ENCODE measurements at regions of chr1 and their contacts with region 1.

Region 1: GRCh38 chr1:171313835-171314320 is at the start of gene FMO4:
- DNase-seq: peak; percentile 79 to 94 (median 89)
- H3K4me3 ChIP-seq: peak within 1 kb of the TSS; percentile 27
- H3K27ac ChIP-seq: peak within 1 kb of the TSS in 1 of 2 donors; percentile 55
- H3K4me1 ChIP-seq: peaks cover 2% of the 10 kb centered on the region
- H3K27me3 ChIP-seq: no peaks in the 10 kb centered on the region
- CTCF ChIP-seq: peak; percentile 74 to 94 (median 85)
- EP300 ChIP-seq: peak; percentile 58
- POLR2A ChIP-seq: no peak
- total RNA-seq, gene FMO4: 1.9 to 4.4 (median 3.7) TPM

Region 2: DNA sequence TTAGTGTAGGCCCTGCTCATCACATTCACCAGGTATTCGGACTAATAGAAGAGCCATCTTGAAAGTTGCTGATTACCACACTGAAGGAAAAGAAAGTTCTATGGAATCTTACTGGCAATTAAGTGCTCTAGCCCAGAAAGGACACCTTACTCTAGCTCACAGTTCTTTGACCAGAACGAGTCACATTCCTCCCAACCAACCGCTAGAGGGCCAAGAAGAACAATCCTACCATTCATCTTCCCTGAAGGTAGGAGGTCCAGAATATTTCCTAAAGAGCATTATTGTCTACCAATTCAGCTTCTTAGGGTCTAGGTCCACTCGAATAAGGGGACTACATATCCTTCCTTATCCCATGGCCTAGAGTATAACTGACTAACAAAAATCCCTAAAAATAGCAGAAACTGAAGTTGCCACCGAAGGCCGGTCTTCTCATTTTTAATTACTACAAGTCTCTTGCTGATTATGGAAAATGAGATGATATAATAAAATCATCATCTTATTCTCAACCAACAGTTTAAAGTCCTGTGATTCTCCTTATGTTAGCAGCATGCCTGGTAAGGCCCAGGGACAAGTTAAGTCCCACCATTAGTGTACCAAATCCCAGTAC is 68.3 kb before region 1 on chr1:
- intact Hi-C with region 1: loop called (anchors 5 to 10 kb)
- DNase-seq: peak in 1 of 5 donors; percentile 47
- H3K4me3 ChIP-seq: no peak overlapping the region
- H3K27ac ChIP-seq: no peak overlapping the region
- H3K4me1 ChIP-seq: no peaks in the 10 kb centered on the region
- H3K27me3 ChIP-seq: no peaks in the 10 kb centered on the region
- CTCF ChIP-seq: peak in 2 of 3 donors; percentile 32 to 47
- EP300 ChIP-seq: no peak
- POLR2A ChIP-seq: no peak

Region 3: DNA sequence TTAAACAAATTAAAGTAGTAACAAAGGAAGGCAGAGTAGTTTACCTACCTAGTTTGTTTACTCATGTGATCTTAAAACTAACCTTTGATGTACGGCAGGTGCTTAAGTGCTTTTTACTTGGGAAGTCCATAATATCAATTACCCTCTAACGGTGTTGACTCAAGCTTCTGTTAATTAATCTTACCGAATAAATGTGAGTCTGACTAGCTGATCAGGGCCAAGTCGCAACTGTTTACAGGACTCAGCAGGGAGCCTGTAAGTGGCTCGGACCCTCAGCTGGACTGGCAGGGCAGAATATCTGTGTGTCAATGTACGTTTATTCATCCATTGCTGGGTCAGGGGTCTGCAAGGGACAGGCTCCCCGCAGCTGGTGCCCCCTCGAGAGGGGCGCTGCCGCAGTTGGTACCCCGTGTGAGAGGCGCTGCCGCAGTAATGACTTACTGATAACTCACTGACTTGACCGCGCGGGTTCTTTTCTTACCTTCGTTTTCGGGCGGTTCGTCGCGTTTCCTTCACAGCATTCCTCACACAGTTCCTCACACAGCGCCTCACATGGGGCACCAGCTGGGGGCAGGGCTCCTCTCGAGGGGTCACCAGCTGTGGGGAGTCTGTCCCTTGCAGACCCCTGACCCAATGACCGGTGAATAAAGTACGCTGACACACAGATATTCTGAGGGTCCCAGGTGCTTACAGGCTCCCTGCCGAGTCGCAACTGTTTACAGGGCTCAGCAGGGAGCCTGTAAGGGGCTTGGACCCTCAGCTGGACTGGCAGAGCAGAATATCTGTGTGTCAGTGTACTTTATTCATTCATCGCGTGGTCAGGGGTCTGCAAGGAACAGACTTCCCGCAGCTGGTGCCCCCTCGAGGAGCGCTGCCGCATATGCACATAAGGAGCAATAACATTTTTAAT is 62.6 kb before region 1 on chr1:
- intact Hi-C with region 1: loop called (anchors 5 to 10 kb)
- DNase-seq: peak; percentile 46 to 72 (median 52)
- H3K4me3 ChIP-seq: peak overlapping the region; percentile 52
- H3K27ac ChIP-seq: no peak overlapping the region
- H3K4me1 ChIP-seq: no peaks in the 10 kb centered on the region
- H3K27me3 ChIP-seq: no peaks in the 10 kb centered on the region
- CTCF ChIP-seq: peak in 2 of 3 donors; percentile 36 to 43
- EP300 ChIP-seq: no peak
- POLR2A ChIP-seq: no peak

Region 4: DNA sequence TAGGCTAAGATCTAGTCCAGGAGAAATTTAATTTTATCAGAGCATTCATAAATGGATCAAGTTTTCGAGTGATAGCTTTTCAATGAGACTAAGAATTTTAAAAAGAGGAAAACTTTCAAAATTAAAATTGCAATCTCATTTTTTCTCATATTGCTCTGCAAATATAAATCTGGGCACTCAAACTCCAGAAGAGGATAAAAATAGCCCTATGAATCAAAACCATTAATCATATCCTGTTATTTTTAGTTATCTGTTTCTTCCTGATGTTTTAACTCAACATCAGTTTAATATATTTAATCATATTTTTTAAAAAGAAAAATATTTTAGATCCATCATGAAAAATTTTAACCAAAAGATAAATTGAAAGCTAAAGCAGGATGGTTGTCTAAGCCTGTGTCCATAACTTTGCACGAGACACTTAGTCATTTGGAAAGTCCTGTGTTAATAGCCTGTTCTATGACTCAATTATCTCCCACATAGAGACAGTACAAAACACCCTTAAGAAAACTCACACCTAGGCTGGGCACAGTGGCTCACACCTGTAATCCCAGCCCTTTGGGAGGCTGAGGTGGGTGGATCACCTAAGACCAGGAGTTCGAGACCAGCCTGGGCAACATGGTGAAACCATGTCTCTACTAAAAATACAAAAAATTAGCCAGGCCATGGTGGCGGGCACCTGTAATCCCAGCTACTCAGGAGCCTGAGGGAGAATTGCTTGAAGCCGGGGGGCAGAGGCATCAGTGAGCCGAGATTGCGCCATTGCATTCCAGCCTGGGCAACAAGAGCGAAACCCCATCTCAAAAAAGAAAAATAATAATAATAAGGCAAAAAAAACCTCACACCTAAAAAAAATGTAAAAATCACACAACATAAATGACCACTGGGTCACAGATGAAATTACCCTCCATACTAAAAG is 154.5 kb after region 1 on chr1:
- intact Hi-C with region 1: no loop called
- DNase-seq: no peak
- H3K4me3 ChIP-seq: no peak overlapping the region
- H3K27ac ChIP-seq: no peak overlapping the region
- H3K4me1 ChIP-seq: no peaks in the 10 kb centered on the region
- H3K27me3 ChIP-seq: no peaks in the 10 kb centered on the region
- CTCF ChIP-seq: no peak
- EP300 ChIP-seq: no peak
- POLR2A ChIP-seq: no peak